Heart right ventricle (tissue), 16 donors: ENCODE measurements at regions of chr7 and their contacts with region 1.

Region 1: DNA sequence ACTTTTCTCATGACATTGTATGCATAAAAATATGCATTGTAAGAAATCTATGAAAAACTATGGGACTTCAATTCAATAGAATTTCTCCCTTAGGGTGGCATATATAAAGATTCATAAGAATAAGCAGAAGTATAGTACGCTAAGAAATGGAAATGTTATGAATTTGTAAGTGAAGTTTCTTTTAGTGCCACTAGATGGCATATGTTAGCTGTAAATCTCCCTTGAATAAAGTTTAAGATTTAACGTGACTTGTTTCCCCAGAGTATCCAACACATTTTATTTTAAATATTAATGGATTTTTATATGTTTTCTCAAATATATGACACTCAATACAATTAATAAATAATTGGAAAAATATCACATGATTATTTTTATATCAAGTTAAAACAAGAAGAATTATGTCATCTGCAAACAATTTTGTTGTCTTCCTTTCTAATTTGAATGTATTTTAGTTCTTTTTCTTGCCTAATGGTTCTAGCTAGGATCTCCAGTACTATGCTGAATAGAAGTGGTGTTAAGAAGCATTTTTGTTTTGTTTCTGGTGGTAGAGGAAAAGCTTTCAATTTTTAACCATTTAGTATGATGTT is 287.2 kb downstream of the HGF start:
- DNase-seq: no peak
- ATAC-seq: no peak
- H3K4me3 ChIP-seq: no peak overlapping the region
- H3K27ac ChIP-seq: peak overlapping the region in 1 of 10 donors; percentile 2
- H3K4me1 ChIP-seq: peaks cover 0 to 22% (median 5%) of the 10 kb centered on the region in 9 donors
- H3K27me3 ChIP-seq: no peaks in the 10 kb centered on the region
- CTCF ChIP-seq: peak; percentile 34 to 82 (median 67)

Region 2: GRCh38 chr7:82017334-82017943 is 534.7 kb after region 1 on chr7:
- intact Hi-C with region 1: loop called in 4 of 10 experiments (anchors 5 to 10 kb)
- DNase-seq: no peak
- ATAC-seq: peak in 2 of 8 donors; percentile 7 to 50
- H3K4me3 ChIP-seq: no peak overlapping the region
- H3K27ac ChIP-seq: no peak overlapping the region
- H3K4me1 ChIP-seq: peaks cover 0 to 30% (median 3%) of the 10 kb centered on the region in 9 donors
- H3K27me3 ChIP-seq: no peaks in the 10 kb centered on the region
- CTCF ChIP-seq: peak in 7 of 9 donors; percentile 34 to 62 (median 53)

Region 3: DNA sequence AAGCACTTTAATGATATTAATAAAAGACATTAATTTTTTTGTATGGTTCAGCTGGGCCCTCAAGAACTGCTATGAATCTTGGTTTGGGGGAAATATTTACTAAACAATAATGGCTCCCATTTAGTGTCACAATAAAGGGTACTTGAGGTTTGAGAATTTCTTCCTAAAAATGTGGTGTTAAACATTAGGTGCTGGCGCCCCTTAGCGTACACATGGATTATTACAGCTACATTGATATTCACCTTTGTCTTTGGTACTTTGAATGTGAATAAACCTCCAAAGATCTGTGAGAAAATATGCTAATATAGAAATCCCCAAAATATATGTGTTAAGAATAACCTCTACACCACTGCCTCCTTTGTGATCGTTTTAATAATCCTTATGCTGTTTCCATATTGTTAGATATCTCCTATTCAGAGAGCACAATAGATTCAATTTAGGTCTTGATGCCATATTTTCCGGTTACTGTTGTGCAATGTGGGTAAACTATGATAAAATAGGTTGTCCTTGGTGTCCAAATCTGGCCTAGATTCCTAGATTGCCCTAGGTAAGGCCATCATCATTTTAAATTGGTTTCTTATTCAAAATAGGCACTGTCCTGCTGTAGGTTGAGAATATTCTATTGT is 1122.7 kb after region 1 on chr7:
- intact Hi-C with region 1: loop called in 1 of 10 experiments (anchors 10 kb)
- DNase-seq: peak in 1 of 2 donors; percentile 8
- ATAC-seq: no peak
- H3K4me3 ChIP-seq: no peak overlapping the region
- H3K27ac ChIP-seq: no peak overlapping the region
- H3K4me1 ChIP-seq: no peaks in the 10 kb centered on the region
- H3K27me3 ChIP-seq: no peaks in the 10 kb centered on the region
- CTCF ChIP-seq: peak; percentile 55 to 82 (median 70)

Region 4: GRCh38 chr7:82722946-82723345 is 1240.3 kb after region 1 on chr7:
- intact Hi-C with region 1: loop called in 3 of 10 experiments (anchors 5 to 10 kb)
- DNase-seq: no peak
- ATAC-seq: no peak
- H3K4me3 ChIP-seq: no peak overlapping the region
- H3K27ac ChIP-seq: no peak overlapping the region
- H3K4me1 ChIP-seq: no peaks in the 10 kb centered on the region
- H3K27me3 ChIP-seq: no peaks in the 10 kb centered on the region
- CTCF ChIP-seq: no peak